HEK293T (cell line): ENCODE measurements at regions of chrX and their contacts with region 1.

Region 1: GRCh38 chrX:70422851-70423341 is at the start of gene GDPD2:
- DNase-seq: peak; percentile 28

Region 2: GRCh38 chrX:70411475-70411874 is 11.4 kb before region 1 on chrX:
- CTCF ChIA-PET with region 1: no interaction called
- POLR2A ChIA-PET with region 1: no interaction called
- DNase-seq: no peak

Region 3: DNA sequence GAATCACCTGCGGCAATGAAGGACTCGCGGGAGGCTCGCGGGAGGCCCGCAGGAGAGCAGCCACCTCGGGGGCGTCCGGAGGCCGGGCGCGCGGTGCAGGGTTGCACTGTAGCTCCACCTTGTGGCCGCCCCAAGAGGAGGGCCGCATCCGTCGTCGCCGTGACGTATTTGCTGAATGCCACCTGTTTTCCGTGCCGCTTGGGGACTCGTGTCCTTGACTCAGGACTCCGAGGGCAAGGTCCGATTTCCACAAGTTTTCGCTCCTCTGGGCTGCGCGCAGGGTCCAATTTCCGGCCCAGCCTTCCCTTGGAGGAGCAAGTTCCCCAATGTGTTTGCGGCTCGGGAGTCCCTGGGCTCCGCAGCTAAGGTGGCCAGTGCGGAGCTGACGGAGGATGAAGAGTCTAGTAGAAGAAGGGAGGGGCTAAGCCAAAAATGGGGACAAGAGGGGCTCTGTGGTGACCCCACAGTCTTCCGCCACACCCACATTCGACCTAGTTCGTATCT is 11.0 kb after region 1 on chrX:
- CTCF ChIA-PET with region 1: interaction called, 5 read pairs
- POLR2A ChIA-PET with region 1: interaction called, 17 read pairs
- DNase-seq: peak; percentile 82